CD8-positive, alpha-beta T cell (primary cell): ENCODE measurements at regions of chr19 and their contacts with region 1.

Region 1: GRCh38 chr19:14048443-14049153 is 13.3 kb downstream of the PALM3 start:
- DNase-seq: peak; percentile 52 to 85 (median 78)
- ATAC-seq: peak; percentile 98
- H3K4me3 ChIP-seq: no peak overlapping the region
- H3K4me3 Mint-ChIP-seq: no peak overlapping the region
- H3K27ac ChIP-seq: peak overlapping the region in 1 of 2 experiments; percentile 34
- H3K27ac Mint-ChIP-seq: peak overlapping the region; percentile 41
- H3K4me1 ChIP-seq: no peaks in the 10 kb centered on the region
- H3K4me1 Mint-ChIP-seq: peaks cover 7% of the 10 kb centered on the region
- H3K27me3 ChIP-seq: no peaks in the 10 kb centered on the region
- H3K27me3 Mint-ChIP-seq: no peaks in the 10 kb centered on the region
- CTCF ChIP-seq: peak; percentile 94

Region 2: DNA sequence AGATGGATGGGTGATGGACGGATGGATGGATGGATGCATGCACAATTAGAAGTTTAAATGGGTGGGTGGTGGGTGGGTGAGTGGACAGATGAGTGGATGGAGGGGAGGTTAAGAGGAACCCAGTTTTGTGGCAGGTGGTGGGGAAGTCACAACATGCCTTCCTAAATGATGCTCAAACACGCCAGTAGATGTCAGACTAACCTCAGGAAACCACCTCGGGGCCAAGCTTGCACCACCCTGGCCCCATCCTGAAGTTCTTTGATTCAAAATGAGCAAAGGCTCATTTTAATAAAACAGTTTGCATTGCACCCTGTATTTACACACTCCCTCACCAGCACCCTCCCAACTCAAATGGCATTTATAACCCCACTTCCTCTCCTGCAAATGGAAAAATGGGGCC is 451.0 kb before region 1 on chr19:
- CTCF ChIA-PET with region 1: no interaction called
- POLR2A ChIA-PET with region 1: no interaction called
- intact Hi-C with region 1: loop called in 1 of 2 experiments (anchors 10 kb)
- DNase-seq: peak in 8 of 9 experiments; percentile 9 to 75 (median 34)
- ATAC-seq: peak; percentile 76
- H3K4me3 ChIP-seq: no peak overlapping the region
- H3K4me3 Mint-ChIP-seq: no peak overlapping the region
- H3K27ac ChIP-seq: no peak overlapping the region
- H3K27ac Mint-ChIP-seq: no peak overlapping the region
- H3K4me1 ChIP-seq: no peaks in the 10 kb centered on the region
- H3K4me1 Mint-ChIP-seq: no peaks in the 10 kb centered on the region
- H3K27me3 ChIP-seq: no peaks in the 10 kb centered on the region
- H3K27me3 Mint-ChIP-seq: peaks cover 24% of the 10 kb centered on the region
- CTCF ChIP-seq: peak; percentile 44

Region 3: GRCh38 chr19:14059093-14059480 is 10.5 kb after region 1 on chr19:
- CTCF ChIA-PET with region 1: interaction called, 24 read pairs
- POLR2A ChIA-PET with region 1: interaction called, 3 read pairs
- intact Hi-C with region 1: no loop called
- DNase-seq: peak in 8 of 9 experiments; percentile 22 to 72 (median 58)
- ATAC-seq: peak; percentile 65
- H3K4me3 ChIP-seq: no peak overlapping the region
- H3K4me3 Mint-ChIP-seq: no peak overlapping the region
- H3K27ac ChIP-seq: no peak overlapping the region
- H3K27ac Mint-ChIP-seq: no peak overlapping the region
- H3K4me1 ChIP-seq: peaks cover 15% of the 10 kb centered on the region
- H3K4me1 Mint-ChIP-seq: peaks cover 18% of the 10 kb centered on the region
- H3K27me3 ChIP-seq: peaks cover 20% of the 10 kb centered on the region in 2 experiments
- H3K27me3 Mint-ChIP-seq: peaks cover 38% of the 10 kb centered on the region
- CTCF ChIP-seq: peak; percentile 72

Region 4: DNA sequence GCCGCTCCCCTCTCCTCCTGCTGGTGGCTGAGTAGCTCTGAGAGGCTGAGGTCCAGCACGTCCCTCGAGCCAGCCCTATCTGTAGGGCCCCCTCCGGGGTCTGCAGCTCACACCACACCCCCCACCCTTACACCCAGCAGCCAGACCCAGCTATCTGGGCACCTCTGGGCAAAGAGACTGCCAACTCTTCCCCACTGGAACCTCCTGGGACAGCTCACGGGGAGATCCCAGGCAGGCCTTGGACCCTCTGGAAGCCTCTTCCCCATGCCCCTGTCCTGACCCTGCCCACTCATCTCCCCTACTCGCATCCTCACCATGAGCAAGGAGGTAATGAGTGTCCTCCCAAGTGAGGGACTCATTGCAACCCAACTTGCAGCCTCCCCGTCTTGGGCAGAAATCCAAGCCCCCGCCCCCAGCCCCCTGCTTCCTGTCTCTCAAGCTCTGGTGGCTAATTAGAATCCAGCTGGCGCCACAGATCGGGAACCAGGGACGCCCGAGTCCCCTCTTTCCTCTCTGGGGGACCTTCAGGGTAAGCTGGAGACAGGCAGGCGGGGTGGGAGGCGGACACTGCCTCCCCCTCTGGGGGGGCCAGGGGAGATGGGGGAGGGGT is 135.2 kb after region 1 on chr19:
- CTCF ChIA-PET with region 1: no interaction called
- POLR2A ChIA-PET with region 1: no interaction called
- intact Hi-C with region 1: no loop called
- DNase-seq: no peak
- ATAC-seq: no peak
- H3K4me3 ChIP-seq: no peak overlapping the region
- H3K4me3 Mint-ChIP-seq: no peak overlapping the region
- H3K27ac ChIP-seq: no peak overlapping the region
- H3K27ac Mint-ChIP-seq: no peak overlapping the region
- H3K4me1 ChIP-seq: no peaks in the 10 kb centered on the region
- H3K4me1 Mint-ChIP-seq: peaks cover 2% of the 10 kb centered on the region
- H3K27me3 ChIP-seq: no peaks in the 10 kb centered on the region
- H3K27me3 Mint-ChIP-seq: no peaks in the 10 kb centered on the region
- CTCF ChIP-seq: no peak